Stomach (tissue), 19 donors: ENCODE measurements at regions of chr1 and their contacts with region 1.

Region 1: GRCh38 chr1:150176593-150176992 is 26.9 kb downstream of the PLEKHO1 start:
- DNase-seq: no peak
- H3K4me3 ChIP-seq: no peak overlapping the region
- H3K27ac ChIP-seq: no peak overlapping the region
- H3K4me1 ChIP-seq: no peaks in the 10 kb centered on the region
- H3K27me3 ChIP-seq: no peaks in the 10 kb centered on the region
- CTCF ChIP-seq: no peak
- EP300 ChIP-seq: no peak
- POLR2A ChIP-seq: no peak

Region 2: GRCh38 chr1:149962123-149962548 is 214.5 kb before region 1 on chr1:
- intact Hi-C with region 1: loop called (anchors 10 kb)
- DNase-seq: peak; percentile 63 to 91
- H3K4me3 ChIP-seq: no peak overlapping the region
- H3K27ac ChIP-seq: peak overlapping the region in 4 of 5 donors; percentile 20 to 67 (median 63)
- H3K4me1 ChIP-seq: peaks cover 7 to 44% (median 11%) of the 10 kb centered on the region in 4 donors
- H3K27me3 ChIP-seq: no peaks in the 10 kb centered on the region
- CTCF ChIP-seq: peak in 5 of 7 experiments; percentile 57 to 90 (median 77)
- EP300 ChIP-seq: no peak
- POLR2A ChIP-seq: no peak

Region 3: GRCh38 chr1:150089846-150090520 is 86.6 kb before region 1 on chr1:
- intact Hi-C with region 1: loop called (anchors 10 kb)
- DNase-seq: no peak
- H3K4me3 ChIP-seq: no peak overlapping the region
- H3K27ac ChIP-seq: no peak overlapping the region
- H3K4me1 ChIP-seq: peaks cover 0 to 7% (median 2%) of the 10 kb centered on the region in 4 donors
- H3K27me3 ChIP-seq: no peaks in the 10 kb centered on the region
- CTCF ChIP-seq: no peak
- EP300 ChIP-seq: no peak
- POLR2A ChIP-seq: no peak

Region 4: GRCh38 chr1:150397402-150398032 is 220.9 kb after region 1 on chr1:
- intact Hi-C with region 1: no loop called
- DNase-seq: no peak
- H3K4me3 ChIP-seq: no peak overlapping the region
- H3K27ac ChIP-seq: no peak overlapping the region
- H3K4me1 ChIP-seq: no peaks in the 10 kb centered on the region
- H3K27me3 ChIP-seq: no peaks in the 10 kb centered on the region
- CTCF ChIP-seq: no peak
- EP300 ChIP-seq: no peak
- POLR2A ChIP-seq: no peak